Activated CD4-positive, alpha-beta memory T cell treated with anti-CD3 and anti-CD28 coated beads for 36 hours (primary cell): ENCODE measurements at regions of chr3 and their contacts with region 1.

Region 1: GRCh38 chr3:183122257-183122932 is 23.1 kb upstream of the MCCC1 start:
- DNase-seq: no peak
- H3K4me3 Mint-ChIP-seq: no peak overlapping the region
- H3K27ac Mint-ChIP-seq: no peak overlapping the region
- H3K4me1 Mint-ChIP-seq: peaks cover 6% of the 10 kb centered on the region
- H3K27me3 Mint-ChIP-seq: peaks cover 3% of the 10 kb centered on the region

Region 2: GRCh38 chr3:183132409-183132808 is 10.0 kb after region 1 on chr3:
- CTCF ChIA-PET with region 1: no interaction called
- POLR2A ChIA-PET with region 1: no interaction called
- intact Hi-C with region 1: no loop called
- DNase-seq: no peak
- H3K4me3 Mint-ChIP-seq: no peak overlapping the region
- H3K27ac Mint-ChIP-seq: no peak overlapping the region
- H3K4me1 Mint-ChIP-seq: no peaks in the 10 kb centered on the region
- H3K27me3 Mint-ChIP-seq: no peaks in the 10 kb centered on the region

Region 3: GRCh38 chr3:183158551-183159006 is 36.2 kb after region 1 on chr3:
- CTCF ChIA-PET with region 1: interaction called, 3 read pairs
- POLR2A ChIA-PET with region 1: no interaction called
- intact Hi-C with region 1: loop called (anchors 2 kb)
- DNase-seq: peak; percentile 67
- H3K4me3 Mint-ChIP-seq: no peak overlapping the region
- H3K27ac Mint-ChIP-seq: peak overlapping the region; percentile 26
- H3K4me1 Mint-ChIP-seq: peaks cover 27% of the 10 kb centered on the region
- H3K27me3 Mint-ChIP-seq: peaks cover 3% of the 10 kb centered on the region

Region 4: DNA sequence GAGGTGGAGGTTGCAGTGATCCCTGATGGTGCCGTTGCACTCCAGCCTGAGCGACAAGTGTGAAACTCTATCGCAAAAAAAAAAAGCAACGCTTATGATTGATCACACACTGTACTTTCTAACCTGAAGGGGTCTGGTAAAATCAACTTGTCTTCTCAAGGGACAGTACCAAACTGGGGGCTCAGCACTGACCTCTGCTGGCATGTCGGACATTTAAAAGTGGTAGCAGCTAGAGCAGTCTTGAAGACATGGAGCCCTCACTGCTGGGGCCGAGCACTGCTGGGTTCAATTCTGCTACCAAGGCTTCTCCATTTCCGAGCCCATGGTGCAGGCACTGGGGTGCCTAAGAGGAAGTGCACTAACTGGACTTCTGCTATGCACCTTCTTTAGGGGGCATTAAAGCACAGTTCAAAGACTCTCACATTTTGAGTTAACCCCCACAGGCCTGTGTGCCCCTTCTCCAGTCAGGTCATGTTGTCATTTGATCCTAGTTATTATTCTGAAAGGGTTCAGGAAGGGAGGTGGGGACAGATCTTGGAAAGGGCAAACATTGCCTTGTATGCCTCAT is 66.6 kb after region 1 on chr3:
- CTCF ChIA-PET with region 1: interaction called, 53 read pairs
- POLR2A ChIA-PET with region 1: no interaction called
- intact Hi-C with region 1: loop called (anchors 2 kb)
- DNase-seq: peak; percentile 55
- H3K4me3 Mint-ChIP-seq: no peak overlapping the region
- H3K27ac Mint-ChIP-seq: no peak overlapping the region
- H3K4me1 Mint-ChIP-seq: peaks cover 10% of the 10 kb centered on the region
- H3K27me3 Mint-ChIP-seq: no peaks in the 10 kb centered on the region

Region 5: GRCh38 chr3:183252973-183253901 is 130.8 kb after region 1 on chr3 and contains the start of gene B3GNT5:
- CTCF ChIA-PET with region 1: interaction called, 3 read pairs
- POLR2A ChIA-PET with region 1: no interaction called
- intact Hi-C with region 1: loop called (anchors 2 kb)
- DNase-seq: peak; percentile 60
- H3K4me3 Mint-ChIP-seq: peak within 1 kb of the TSS; percentile 76
- H3K27ac Mint-ChIP-seq: peak within 1 kb of the TSS; percentile 34
- H3K4me1 Mint-ChIP-seq: peaks cover 12% of the 10 kb centered on the region
- H3K27me3 Mint-ChIP-seq: peaks cover 18% of the 10 kb centered on the region
- total RNA-seq, gene B3GNT5: 12.7 to 12.9 TPM